ENCODE measurements at regions of chr4 and their contacts with region 1.

Region 1: DNA sequence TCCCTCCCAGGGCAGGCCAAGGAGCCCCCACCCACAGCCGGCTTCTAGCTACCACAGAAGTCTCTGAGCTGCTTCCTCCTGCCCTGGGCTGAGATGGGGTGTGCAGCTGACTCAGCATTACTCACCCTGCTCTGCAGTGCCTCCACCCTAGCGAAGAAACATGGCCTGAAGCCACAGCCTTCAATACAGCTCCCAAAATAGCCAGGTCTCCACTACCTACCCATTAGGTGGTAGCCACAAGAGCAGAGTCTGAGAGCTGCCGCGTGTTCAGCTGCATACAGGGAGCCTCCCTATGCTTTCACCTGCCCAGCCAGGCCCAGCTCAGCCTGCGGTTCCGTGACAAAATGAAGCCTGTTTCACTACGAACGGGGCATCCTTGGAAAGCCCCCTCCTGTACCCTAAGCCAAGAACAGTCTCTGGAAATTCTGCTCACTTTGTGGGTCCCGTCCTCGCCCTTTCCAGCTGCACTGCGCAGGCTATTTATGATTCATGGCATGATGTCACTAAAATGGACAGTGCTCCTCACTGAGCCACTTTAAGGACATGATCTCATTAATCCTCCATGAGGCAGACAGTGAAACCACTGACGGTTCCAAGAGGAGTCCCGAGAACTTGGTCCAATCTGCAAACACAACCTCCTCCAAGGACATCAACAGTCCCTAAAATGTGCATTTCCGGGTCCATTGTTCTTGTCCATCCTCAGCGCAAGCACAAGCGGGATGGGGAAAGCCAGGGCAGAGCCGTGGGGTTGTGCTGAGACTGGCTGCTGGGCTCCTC is 20.2 kb downstream of the WDR1 start:
- DNase-seq: peak; percentile 69 to 86
- ATAC-seq: peak; percentile 71 to 87 (median 79)
- H3K4me3 ChIP-seq: no peak overlapping the region
- H3K4me3 Mint-ChIP-seq: peak overlapping the region; percentile 76
- H3K27ac ChIP-seq: peak overlapping the region; percentile 79
- H3K27ac Mint-ChIP-seq: peak overlapping the region; percentile 88 to 99
- H3K4me1 ChIP-seq: peaks cover 100% of the 10 kb centered on the region
- H3K4me1 Mint-ChIP-seq: peaks cover 93 to 97% of the 10 kb centered on the region in 2 donors
- H3K27me3 ChIP-seq: no peaks in the 10 kb centered on the region
- H3K27me3 Mint-ChIP-seq: no peaks in the 10 kb centered on the region
- CTCF ChIP-seq: no peak

Region 2: GRCh38 chr4:10018818-10019461 is 77.4 kb before region 1 on chr4:
- intact Hi-C with region 1: loop called (anchors 10 kb)
- DNase-seq: peak; percentile 90 to 94
- ATAC-seq: peak; percentile 97 to 99 (median 98)
- H3K4me3 ChIP-seq: peak overlapping the region; percentile 58
- H3K4me3 Mint-ChIP-seq: peak overlapping the region; percentile 91
- H3K27ac ChIP-seq: peak overlapping the region; percentile 83
- H3K27ac Mint-ChIP-seq: peak overlapping the region; percentile 89 to 94
- H3K4me1 ChIP-seq: peaks cover 36% of the 10 kb centered on the region
- H3K4me1 Mint-ChIP-seq: peaks cover 13 to 18% of the 10 kb centered on the region in 2 donors
- H3K27me3 ChIP-seq: no peaks in the 10 kb centered on the region
- H3K27me3 Mint-ChIP-seq: peaks cover 0 to 4% of the 10 kb centered on the region in 2 donors
- CTCF ChIP-seq: peak; percentile 100

Region 3: DNA sequence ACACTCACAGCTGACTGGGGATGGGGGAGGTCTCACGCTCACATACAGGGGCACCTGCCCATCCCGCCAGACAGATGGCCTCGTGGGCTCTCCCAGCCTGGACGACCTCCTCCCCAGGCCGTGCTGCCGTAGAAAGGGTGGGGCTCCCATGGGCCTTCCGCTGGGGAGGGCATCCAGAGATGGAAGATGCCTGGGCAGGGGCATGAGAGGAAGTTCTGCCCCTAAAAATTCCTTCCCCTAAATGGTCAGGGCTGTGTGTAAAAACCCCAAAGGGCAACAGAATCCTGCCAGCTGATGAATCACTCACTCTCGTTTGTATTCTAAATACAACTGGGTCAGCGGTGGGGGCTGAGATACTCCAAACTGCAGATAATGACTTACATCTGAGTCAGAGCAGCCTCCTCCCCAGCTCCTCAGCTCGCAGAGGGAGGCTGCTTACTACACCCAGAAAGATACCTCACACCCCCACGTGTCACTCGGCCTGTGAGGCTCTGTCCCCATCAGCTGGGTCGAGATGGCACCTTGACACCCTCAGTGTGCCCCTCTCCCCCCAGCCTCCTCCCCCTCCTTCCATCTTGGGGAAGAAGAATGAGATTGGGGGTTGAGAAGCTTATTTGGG is 10.1 kb after region 1 on chr4:
- intact Hi-C with region 1: loop called (anchors 1 kb)
- DNase-seq: peak; percentile 63 to 78
- ATAC-seq: peak; percentile 87 to 92 (median 90)
- H3K4me3 ChIP-seq: no peak overlapping the region
- H3K4me3 Mint-ChIP-seq: peak overlapping the region; percentile 64
- H3K27ac ChIP-seq: peak overlapping the region; percentile 66
- H3K27ac Mint-ChIP-seq: peak overlapping the region; percentile 82 to 99
- H3K4me1 ChIP-seq: peaks cover 90% of the 10 kb centered on the region
- H3K4me1 Mint-ChIP-seq: peaks cover 91 to 99% of the 10 kb centered on the region in 2 donors
- H3K27me3 ChIP-seq: no peaks in the 10 kb centered on the region
- H3K27me3 Mint-ChIP-seq: no peaks in the 10 kb centered on the region
- CTCF ChIP-seq: no peak

Region 4: GRCh38 chr4:10116580-10117358 is 20.4 kb after region 1 on chr4 and contains the start of gene WDR1:
- intact Hi-C with region 1: loop called (anchors 1 kb)
- DNase-seq: peak; percentile 93 to 94
- ATAC-seq: peak; percentile 83 to 93 (median 88)
- H3K4me3 ChIP-seq: peak within 1 kb of the TSS; percentile 68
- H3K4me3 Mint-ChIP-seq: peak within 1 kb of the TSS; percentile 94
- H3K27ac ChIP-seq: peak within 1 kb of the TSS; percentile 95
- H3K27ac Mint-ChIP-seq: peak within 1 kb of the TSS; percentile 98 to 99
- H3K4me1 ChIP-seq: peaks cover 49% of the 10 kb centered on the region
- H3K4me1 Mint-ChIP-seq: peaks cover 50 to 61% of the 10 kb centered on the region in 2 donors
- H3K27me3 ChIP-seq: no peaks in the 10 kb centered on the region
- H3K27me3 Mint-ChIP-seq: no peaks in the 10 kb centered on the region
- CTCF ChIP-seq: no peak
- total RNA-seq, gene WDR1: 411 to 477 (median 468) TPM

Measured in natural killer cell (primary cell).